ENCODE measurements at regions of chr5 and their contacts with region 1.

Region 1: DNA sequence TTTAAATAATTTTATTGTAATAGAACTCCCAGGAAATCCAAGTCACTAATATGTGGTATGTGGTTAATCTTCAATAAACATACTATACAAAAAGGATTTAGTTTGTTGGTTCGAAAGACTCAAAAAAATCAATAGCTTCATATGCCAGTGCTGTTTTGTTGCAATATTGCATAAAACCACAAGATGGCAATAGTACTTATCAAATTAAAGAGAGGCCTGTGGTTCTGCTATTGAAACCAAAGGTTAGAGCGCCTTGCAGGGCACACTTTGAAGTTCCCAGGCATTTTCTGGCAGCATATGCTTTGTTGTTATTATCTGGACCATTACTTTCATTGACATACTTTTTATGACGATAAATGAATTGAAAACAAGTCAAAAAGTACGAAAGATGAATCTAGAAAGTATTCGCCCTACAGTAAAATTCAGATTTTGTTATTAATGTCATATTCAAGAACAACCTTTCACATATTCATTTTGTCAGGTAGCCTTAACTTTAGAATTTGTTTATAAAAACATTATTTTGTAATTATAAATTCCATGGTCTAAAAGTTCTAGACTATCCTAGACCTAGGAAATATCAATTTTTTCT is 316.3 kb downstream of the MCTP1 start:
- DNase-seq: peak; percentile 34
- CTCF ChIP-seq: peak; percentile 48

Region 2: GRCh38 chr5:95237324-95237723 is 268.7 kb after region 1 on chr5:
- CTCF ChIA-PET with region 1: interaction called, 13 read pairs
- POLR2A ChIA-PET with region 1: no interaction called
- DNase-seq: no peak
- CTCF ChIP-seq: no peak

Region 3: GRCh38 chr5:95261437-95262175 is 293.0 kb after region 1 on chr5:
- CTCF ChIA-PET with region 1: interaction called, 18 read pairs
- POLR2A ChIA-PET with region 1: no interaction called
- DNase-seq: peak; percentile 28
- CTCF ChIP-seq: peak; percentile 47